Activated CD8-positive, alpha-beta T cell treated with anti-CD3 and anti-CD28 coated beads for 36 hours (primary cell): ENCODE measurements at regions of chr11 and their contacts with region 1.

Region 1: GRCh38 chr11:34926101-34926830 is 9.8 kb downstream of the PDHX start:
- DNase-seq: no peak
- ATAC-seq: peak; percentile 69
- H3K4me3 Mint-ChIP-seq: no peak overlapping the region
- H3K27ac Mint-ChIP-seq: no peak overlapping the region
- H3K4me1 Mint-ChIP-seq: peaks cover 18% of the 10 kb centered on the region
- H3K27me3 Mint-ChIP-seq: no peaks in the 10 kb centered on the region
- CTCF ChIP-seq: peak; percentile 84

Region 2: DNA sequence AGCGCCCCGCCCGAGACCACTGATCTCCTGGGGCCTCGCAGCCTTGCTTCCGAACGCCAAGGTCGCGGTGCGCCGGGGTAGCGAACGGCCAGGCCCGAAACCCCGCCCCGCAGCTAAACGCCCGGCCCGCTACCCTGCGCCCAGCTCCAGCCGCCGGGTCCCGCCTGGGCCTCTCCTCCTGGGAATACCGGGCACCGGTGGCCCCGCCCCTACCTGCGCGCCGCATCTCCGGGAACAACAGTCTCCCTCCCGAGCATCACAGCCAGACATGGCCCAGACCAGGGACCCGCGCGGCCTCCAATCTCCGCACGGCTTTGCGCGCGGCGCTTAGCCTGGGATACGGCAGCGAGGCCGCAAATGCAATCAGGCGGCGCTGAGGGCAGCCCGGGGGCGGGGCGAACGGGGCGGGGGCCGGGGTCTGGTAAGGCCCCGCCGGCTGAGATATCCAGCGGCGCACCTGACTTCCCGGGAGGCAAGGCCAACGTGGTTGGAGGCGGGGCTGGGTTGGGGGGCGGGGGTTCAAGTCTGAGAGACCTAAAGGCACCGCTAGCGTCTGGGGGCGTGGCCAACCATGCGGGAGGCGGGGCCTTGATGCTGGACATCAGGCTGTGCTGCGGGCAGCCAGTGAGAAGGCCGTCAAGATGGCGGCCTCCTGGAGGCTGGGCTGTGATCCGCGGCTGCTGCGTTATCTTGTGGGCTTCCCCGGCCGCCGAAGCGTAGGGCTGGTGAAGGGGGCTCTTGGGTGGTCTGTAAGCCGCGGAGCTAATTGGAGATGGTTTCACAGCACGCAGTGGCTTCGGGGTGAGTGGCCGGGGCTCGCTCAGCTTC is 10.0 kb before region 1 on chr11 and contains the starts of genes APIP and PDHX:
- CTCF ChIA-PET with region 1: interaction called, 11 read pairs
- POLR2A ChIA-PET with region 1: interaction called, 3 read pairs
- intact Hi-C with region 1: no loop called
- DNase-seq: peak; percentile 99
- ATAC-seq: peak; percentile 96
- H3K4me3 Mint-ChIP-seq: peak within 1 kb of the TSS; percentile 79
- H3K27ac Mint-ChIP-seq: peak within 1 kb of the TSS; percentile 89
- H3K4me1 Mint-ChIP-seq: peaks cover 37% of the 10 kb centered on the region
- H3K27me3 Mint-ChIP-seq: no peaks in the 10 kb centered on the region
- CTCF ChIP-seq: no peak
- total RNA-seq, gene APIP: 34.4 to 39.0 TPM
- total RNA-seq, gene PDHX: 37.1 to 37.4 TPM

Region 3: DNA sequence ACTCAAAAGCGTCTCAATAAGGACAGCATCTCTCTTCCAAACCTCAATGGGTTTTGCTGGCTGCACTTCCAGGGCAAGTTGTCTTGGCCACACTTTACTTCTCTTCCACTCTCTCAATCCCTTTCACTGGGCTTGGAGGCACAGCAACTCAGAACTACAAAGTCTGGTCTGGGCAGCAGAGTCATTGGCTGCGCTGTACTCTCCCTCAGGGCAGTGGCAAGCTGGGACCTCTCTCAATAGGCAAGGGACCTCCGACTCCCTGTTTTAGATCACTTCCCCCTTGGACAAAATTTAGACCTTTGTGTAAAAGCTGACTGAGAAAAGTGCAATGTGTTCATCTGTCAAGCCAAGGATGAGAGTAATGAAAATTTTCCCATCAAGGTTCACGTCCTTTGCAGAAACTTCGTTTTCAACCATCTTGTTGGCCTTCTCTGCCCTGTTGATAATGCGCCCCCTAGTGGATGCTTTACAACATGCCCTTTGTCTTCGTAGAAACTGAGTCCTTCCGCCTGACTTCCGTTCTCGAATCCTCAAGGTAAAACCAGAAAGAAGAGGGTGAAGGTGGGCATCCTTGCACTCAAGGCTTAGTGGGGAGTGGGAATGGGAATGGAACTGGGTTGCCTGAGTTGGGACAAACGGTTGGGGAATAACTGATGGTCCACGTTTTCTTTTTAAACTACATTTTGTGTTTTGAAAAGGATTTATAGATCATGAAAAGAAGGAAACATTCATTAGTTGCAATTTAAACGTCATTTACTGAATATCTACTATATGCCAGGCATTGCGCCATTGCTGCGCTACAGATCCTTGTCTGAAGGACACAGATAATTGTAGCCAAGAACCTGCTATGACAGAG is 311.8 kb after region 1 on chr11:
- CTCF ChIA-PET with region 1: interaction called, 21 read pairs
- POLR2A ChIA-PET with region 1: no interaction called
- intact Hi-C with region 1: no loop called
- DNase-seq: peak; percentile 70
- ATAC-seq: no peak
- H3K4me3 Mint-ChIP-seq: no peak overlapping the region
- H3K27ac Mint-ChIP-seq: no peak overlapping the region
- H3K4me1 Mint-ChIP-seq: peaks cover 79% of the 10 kb centered on the region
- H3K27me3 Mint-ChIP-seq: no peaks in the 10 kb centered on the region
- CTCF ChIP-seq: peak; percentile 88

Region 4: GRCh38 chr11:35305670-35306382 is 379.6 kb after region 1 on chr11:
- CTCF ChIA-PET with region 1: interaction called, 15 read pairs
- POLR2A ChIA-PET with region 1: no interaction called
- intact Hi-C with region 1: no loop called
- DNase-seq: peak; percentile 32
- ATAC-seq: peak; percentile 86
- H3K4me3 Mint-ChIP-seq: peak overlapping the region; percentile 17
- H3K27ac Mint-ChIP-seq: peak overlapping the region; percentile 74
- H3K4me1 Mint-ChIP-seq: peaks cover 20% of the 10 kb centered on the region
- H3K27me3 Mint-ChIP-seq: no peaks in the 10 kb centered on the region
- CTCF ChIP-seq: peak; percentile 67

Region 5: DNA sequence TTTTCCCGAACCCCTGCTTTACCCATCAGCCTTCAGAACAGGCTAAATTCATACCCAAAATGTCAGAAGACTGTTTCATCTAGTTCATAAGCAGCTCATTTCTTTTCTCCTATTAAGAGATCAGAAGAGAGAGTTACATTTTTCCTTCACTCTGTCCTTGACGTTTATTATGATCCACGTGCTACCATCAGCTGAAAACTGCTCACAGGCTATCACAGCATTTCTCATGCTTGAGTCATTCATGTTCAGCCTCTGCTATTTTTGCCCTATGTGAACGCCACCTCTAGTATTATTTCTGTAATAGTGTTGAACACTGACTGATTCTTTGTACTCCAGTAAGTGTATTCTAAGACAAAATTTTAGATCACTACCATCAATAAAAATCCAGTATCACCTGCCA is 441.2 kb after region 1 on chr11:
- CTCF ChIA-PET with region 1: interaction called, 12 read pairs
- POLR2A ChIA-PET with region 1: no interaction called
- intact Hi-C with region 1: no loop called
- DNase-seq: no peak
- ATAC-seq: no peak
- H3K4me3 Mint-ChIP-seq: no peak overlapping the region
- H3K27ac Mint-ChIP-seq: no peak overlapping the region
- H3K4me1 Mint-ChIP-seq: peaks cover 5% of the 10 kb centered on the region
- H3K27me3 Mint-ChIP-seq: no peaks in the 10 kb centered on the region
- CTCF ChIP-seq: no peak